Mammary epithelial cell (primary cell): ENCODE measurements at regions of chr12 and their contacts with region 1.

Region 1: DNA sequence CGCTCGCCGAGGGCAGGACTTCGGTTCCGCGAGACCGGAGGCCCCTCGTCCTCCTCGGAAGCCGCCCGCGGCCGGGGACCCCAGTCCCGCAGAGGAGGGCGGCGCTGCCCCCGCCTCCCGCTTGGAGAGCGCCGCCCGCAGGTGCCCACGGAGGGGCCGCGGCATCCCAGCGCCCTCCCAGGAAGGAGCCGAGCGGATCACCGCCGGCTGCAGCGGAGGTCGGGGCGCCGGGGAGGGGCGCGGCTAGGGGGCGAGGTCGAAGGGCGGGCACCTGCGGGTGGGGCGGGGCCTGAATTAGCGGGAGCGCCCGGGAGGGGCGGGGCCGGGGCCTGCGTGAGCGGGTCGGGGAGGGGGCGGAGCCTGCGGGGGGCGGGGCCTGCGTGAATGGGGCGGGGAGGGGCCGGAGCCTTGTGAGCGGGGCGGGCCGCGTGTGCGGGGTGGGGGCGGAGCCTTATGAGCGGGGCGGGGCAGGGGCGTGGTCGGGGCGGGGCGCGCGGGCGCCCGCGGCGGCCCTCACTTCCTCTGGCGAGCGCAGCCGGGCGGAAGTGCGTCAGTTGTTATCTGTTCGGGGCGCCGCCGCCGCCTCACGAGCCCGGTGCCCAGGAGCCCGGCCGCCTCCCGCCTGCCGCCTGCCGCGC is at the start of gene FBRSL1:
- DNase-seq: peak; percentile 66
- H3K4me3 ChIP-seq: peak within 1 kb of the TSS; percentile 47 to 68 (median 64)
- H3K27ac ChIP-seq: no peak within 1 kb of the TSS
- H3K4me1 ChIP-seq: peaks cover 42% of the 10 kb centered on the region
- H3K27me3 ChIP-seq: no peaks in the 10 kb centered on the region
- CTCF ChIP-seq: peak in 1 of 2 donors; percentile 4
- total RNA-seq, gene FBRSL1: 28.8 to 58.6 TPM

Region 2: DNA sequence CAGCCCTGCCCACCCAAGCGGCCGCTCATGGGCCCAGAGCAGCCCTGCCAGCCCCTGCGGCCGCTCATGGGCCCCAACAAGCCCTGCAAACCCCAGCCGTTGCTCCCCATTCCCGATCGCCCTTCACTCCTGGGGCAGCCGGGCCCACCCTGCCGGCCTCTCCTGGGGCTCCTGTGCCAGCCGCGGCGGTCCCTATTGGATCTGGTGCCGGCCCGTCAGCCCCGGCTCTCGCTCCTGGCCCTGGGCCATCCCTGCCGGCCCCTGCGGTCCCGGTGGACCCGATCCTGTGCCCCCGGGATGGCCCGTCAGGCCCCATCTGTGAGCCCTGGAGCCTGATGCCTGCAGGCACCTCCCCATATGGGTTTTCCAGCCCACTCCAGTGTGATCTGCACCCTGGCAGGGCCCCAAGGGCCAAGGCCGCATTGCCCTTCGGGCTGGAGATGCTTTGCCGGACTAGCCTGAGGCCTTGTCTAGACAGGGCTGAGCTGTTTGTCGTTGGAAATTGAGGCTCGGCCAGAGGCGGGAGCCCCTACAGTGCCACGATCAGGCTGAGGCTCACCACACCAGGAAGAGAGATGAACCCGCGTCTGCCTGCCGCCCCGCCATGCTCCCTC is 20.5 kb after region 1 on chr12:
- CTCF ChIA-PET with region 1: interaction called, 5 read pairs
- dilution Hi-C with region 1: no loop called
- in situ Hi-C with region 1: no loop called
- intact Hi-C with region 1: loop called (anchors 1 kb)
- DNase-seq: no peak
- H3K4me3 ChIP-seq: no peak overlapping the region
- H3K27ac ChIP-seq: no peak overlapping the region
- H3K4me1 ChIP-seq: peaks cover 15% of the 10 kb centered on the region
- H3K27me3 ChIP-seq: no peaks in the 10 kb centered on the region
- CTCF ChIP-seq: no peak